Adrenal gland (tissue), 19 donors: ENCODE measurements at regions of chr18 and their contacts with region 1.

Region 1: DNA sequence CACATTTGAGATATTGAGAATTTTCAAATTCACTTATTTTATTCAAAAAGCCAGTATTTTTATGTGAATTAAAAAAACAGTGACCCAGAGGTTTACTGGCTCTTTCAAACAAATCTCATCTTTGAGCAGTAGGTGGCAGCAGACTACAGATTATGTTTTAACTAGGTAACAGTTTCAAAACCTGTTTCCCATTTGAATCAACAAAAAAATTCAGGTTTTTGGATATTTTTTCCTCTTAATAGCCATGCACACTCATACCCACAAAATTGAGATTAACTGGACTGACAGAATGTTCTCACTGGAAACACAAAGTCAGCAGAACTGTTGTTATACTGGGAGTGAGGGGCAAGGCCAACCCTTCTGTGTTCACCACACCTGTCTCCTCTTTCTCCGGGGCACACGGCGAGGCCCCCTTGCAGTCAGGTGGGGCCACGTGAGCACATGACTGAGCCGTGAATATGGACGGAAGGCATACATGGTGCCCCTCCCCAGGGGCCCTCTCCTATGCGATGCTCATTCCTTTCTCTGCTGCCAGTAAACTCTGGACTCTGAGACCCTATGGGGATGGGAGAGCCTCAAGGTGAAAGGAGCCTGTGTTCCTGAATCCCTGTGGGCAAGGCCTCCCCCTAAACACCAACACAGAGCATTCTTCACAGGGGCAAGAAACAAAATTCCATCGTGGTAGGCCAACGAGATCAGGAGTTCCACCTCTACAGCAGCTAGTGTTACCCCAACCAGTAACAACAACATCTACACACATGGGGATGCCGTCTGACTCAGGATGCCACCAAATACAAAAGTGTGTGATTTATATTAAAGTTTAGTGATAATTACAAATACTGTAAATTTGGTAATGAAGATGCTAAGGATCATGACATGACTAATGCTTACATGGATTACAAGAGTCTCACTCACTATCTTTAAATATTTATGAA is 80.4 kb downstream of the LPIN2 start:
- DNase-seq: peak in 5 of 7 donors; percentile 41 to 72 (median 52)
- H3K4me3 ChIP-seq: no peak overlapping the region
- H3K27ac ChIP-seq: no peak overlapping the region
- H3K4me1 ChIP-seq: no peaks in the 10 kb centered on the region
- H3K27me3 ChIP-seq: no peaks in the 10 kb centered on the region
- CTCF ChIP-seq: peak; percentile 68 to 87 (median 80)
- POLR2A ChIP-seq: no peak

Region 2: GRCh38 chr18:3062798-3063680 is 130.5 kb after region 1 on chr18:
- intact Hi-C with region 1: loop called in 1 of 2 experiments (anchors 10 kb)
- DNase-seq: peak; percentile 22 to 74 (median 53)
- H3K4me3 ChIP-seq: no peak overlapping the region
- H3K27ac ChIP-seq: no peak overlapping the region
- H3K4me1 ChIP-seq: peaks cover 0 to 20% of the 10 kb centered on the region in 2 donors
- H3K27me3 ChIP-seq: no peaks in the 10 kb centered on the region
- CTCF ChIP-seq: peak; percentile 19 to 65 (median 50)
- POLR2A ChIP-seq: no peak

Region 3: GRCh38 chr18:3129053-3129864 is 196.7 kb after region 1 on chr18:
- intact Hi-C with region 1: loop called in 1 of 2 experiments (anchors 5 kb)
- DNase-seq: peak; percentile 72 to 94 (median 84)
- H3K4me3 ChIP-seq: no peak overlapping the region
- H3K27ac ChIP-seq: no peak overlapping the region
- H3K4me1 ChIP-seq: peaks cover 0 to 4% of the 10 kb centered on the region in 2 donors
- H3K27me3 ChIP-seq: no peaks in the 10 kb centered on the region
- CTCF ChIP-seq: peak; percentile 63 to 83 (median 76)
- POLR2A ChIP-seq: no peak

Region 4: DNA sequence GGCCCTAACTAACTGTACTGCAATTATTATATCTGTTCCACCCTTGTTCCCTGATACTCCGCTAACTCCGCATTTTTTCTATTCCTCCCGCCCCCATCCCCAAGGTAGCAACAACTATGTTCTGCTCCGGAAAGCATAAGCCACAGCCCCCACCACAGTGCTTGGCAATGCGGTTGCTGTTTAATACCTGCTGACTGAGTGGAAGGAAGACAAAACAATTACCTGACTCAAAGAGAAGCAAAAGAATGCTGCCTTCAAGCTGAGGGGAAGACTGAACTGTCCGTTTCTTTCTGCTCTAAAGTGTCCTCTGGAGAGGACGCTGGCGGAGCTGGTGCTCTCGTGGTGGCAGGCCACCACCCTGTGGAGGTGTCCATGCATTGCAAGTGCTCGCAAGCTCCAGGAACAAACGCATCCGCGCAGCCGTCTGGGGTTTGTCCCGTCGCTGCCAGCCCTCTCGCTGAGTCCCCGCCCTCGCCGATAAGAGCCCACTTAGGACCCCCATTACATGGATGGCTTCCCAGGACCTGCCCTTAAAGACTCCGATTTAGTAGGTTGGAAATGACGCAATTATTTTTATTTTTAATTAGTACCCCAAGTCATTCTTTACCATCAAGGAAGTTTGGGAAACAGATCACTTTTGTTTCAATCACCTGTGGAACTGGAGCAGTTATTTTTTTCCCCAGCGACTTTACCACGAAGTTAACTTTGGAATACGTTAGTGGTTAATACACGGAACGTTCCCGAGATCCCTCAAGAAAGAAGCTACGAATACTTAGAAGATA is 313.5 kb after region 1 on chr18:
- intact Hi-C with region 1: loop called (anchors 5 to 10 kb)
- DNase-seq: peak; percentile 89 to 95 (median 92)
- H3K4me3 ChIP-seq: peak overlapping the region in 2 of 4 donors; percentile 21 to 66
- H3K27ac ChIP-seq: peak overlapping the region; percentile 69 to 100 (median 97)
- H3K4me1 ChIP-seq: peaks cover 14 to 38% of the 10 kb centered on the region in 2 donors
- H3K27me3 ChIP-seq: no peaks in the 10 kb centered on the region
- CTCF ChIP-seq: peak; percentile 90 to 98 (median 96)
- POLR2A ChIP-seq: peak in 1 of 2 donors; percentile 31